ENCODE measurements at regions of chr10 and their contacts with region 1.

Region 1: GRCh38 chr10:110076559-110077318 is 69.0 kb downstream of the ADD3 start:
- DNase-seq: peak; percentile 54
- H3K4me3 Mint-ChIP-seq: peak overlapping the region; percentile 89
- H3K27ac Mint-ChIP-seq: peak overlapping the region; percentile 99
- H3K4me1 Mint-ChIP-seq: peaks cover 81% of the 10 kb centered on the region
- H3K27me3 Mint-ChIP-seq: no peaks in the 10 kb centered on the region

Region 2: DNA sequence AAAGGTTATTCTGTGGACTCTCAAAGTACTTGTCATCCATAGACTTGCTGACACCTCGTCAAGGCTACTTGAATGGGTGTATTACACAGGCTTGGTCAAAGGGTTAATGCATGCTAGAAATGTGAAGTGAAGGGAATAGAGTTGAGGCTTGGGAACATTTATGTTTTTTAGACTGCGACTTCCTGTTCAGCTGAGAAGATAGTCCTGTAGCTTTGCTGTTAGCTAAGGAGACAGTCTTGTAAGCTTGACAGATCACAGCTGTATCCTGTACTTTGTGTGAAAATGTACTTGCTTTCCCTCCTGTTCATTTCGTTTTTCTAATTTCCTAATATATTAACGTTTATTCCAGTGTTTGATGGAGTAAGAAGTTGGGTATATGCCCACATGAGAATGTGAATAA is 16.8 kb before region 1 on chr10:
- CTCF ChIA-PET with region 1: interaction called, 13 read pairs
- POLR2A ChIA-PET with region 1: interaction called, 60 read pairs
- DNase-seq: no peak
- H3K4me3 Mint-ChIP-seq: no peak overlapping the region
- H3K27ac Mint-ChIP-seq: peak overlapping the region; percentile 17
- H3K4me1 Mint-ChIP-seq: peaks cover 85% of the 10 kb centered on the region
- H3K27me3 Mint-ChIP-seq: no peaks in the 10 kb centered on the region

Region 3: DNA sequence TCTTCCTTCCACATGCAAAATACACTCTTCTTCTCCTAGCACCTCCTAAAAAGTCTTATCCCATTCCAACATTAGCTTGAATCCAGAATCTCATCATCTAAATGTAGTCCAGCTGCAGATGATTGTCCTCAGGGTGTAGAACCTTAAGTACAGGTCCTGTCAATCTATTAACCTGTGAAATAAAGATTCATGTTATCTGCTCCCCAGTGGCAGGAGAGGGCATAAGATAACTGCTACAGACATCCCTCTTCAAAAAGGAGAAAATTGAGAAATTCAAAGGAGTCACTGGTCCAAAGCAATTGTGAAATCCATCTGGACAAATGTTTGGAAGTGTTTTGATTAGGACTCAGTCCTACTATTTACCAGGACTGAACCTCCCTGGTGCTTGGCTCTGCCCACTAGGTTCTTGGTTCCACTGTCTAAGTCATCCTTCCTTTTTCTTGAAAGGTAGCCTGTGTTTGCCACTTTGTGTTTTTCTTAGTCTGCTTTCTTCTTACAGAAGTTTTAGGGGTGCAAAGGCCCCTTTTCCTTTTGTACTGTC is 27.3 kb after region 1 on chr10:
- CTCF ChIA-PET with region 1: no interaction called
- POLR2A ChIA-PET with region 1: interaction called, 12 read pairs
- DNase-seq: no peak
- H3K4me3 Mint-ChIP-seq: no peak overlapping the region
- H3K27ac Mint-ChIP-seq: peak overlapping the region; percentile 65
- H3K4me1 Mint-ChIP-seq: peaks cover 34% of the 10 kb centered on the region
- H3K27me3 Mint-ChIP-seq: no peaks in the 10 kb centered on the region

Region 4: GRCh38 chr10:110398419-110399162 is 321.9 kb after region 1 on chr10:
- CTCF ChIA-PET with region 1: no interaction called
- POLR2A ChIA-PET with region 1: no interaction called
- DNase-seq: no peak
- H3K4me3 Mint-ChIP-seq: no peak overlapping the region
- H3K27ac Mint-ChIP-seq: no peak overlapping the region
- H3K4me1 Mint-ChIP-seq: peaks cover 62% of the 10 kb centered on the region
- H3K27me3 Mint-ChIP-seq: no peaks in the 10 kb centered on the region